Activated B cell treated with CpG ODN at 0.5 μM for 24 hours (primary cell): ENCODE measurements at regions of chr16 and their contacts with region 1.

Region 1: GRCh38 chr16:89490387-89491237 is at the start of gene ANKRD11:
- DNase-seq: peak; percentile 99
- ATAC-seq: peak; percentile 80
- H3K4me3 Mint-ChIP-seq: peak within 1 kb of the TSS; percentile 91
- H3K27ac Mint-ChIP-seq: peak within 1 kb of the TSS; percentile 97
- H3K4me1 Mint-ChIP-seq: peaks cover 58% of the 10 kb centered on the region
- H3K27me3 Mint-ChIP-seq: no peaks in the 10 kb centered on the region
- CTCF ChIP-seq: no peak
- total RNA-seq, gene ANKRD11: 216 and 243 TPM in 2 replicates

Region 2: GRCh38 chr16:89363621-89364393 is 126.8 kb before region 1 on chr16:
- CTCF ChIA-PET with region 1: no interaction called
- POLR2A ChIA-PET with region 1: interaction called, 8 read pairs
- intact Hi-C with region 1: loop called (anchors 1 kb)
- DNase-seq: no peak
- ATAC-seq: no peak
- H3K4me3 Mint-ChIP-seq: no peak overlapping the region
- H3K27ac Mint-ChIP-seq: peak overlapping the region; percentile 31
- H3K4me1 Mint-ChIP-seq: peaks cover 98% of the 10 kb centered on the region
- H3K27me3 Mint-ChIP-seq: no peaks in the 10 kb centered on the region
- CTCF ChIP-seq: no peak

Region 3: GRCh38 chr16:89436366-89436765 is 54.2 kb before region 1 on chr16:
- CTCF ChIA-PET with region 1: no interaction called
- POLR2A ChIA-PET with region 1: interaction called, 17 read pairs
- intact Hi-C with region 1: loop called (anchors 5 kb)
- DNase-seq: no peak
- ATAC-seq: no peak
- H3K4me3 Mint-ChIP-seq: no peak overlapping the region
- H3K27ac Mint-ChIP-seq: no peak overlapping the region
- H3K4me1 Mint-ChIP-seq: peaks cover 74% of the 10 kb centered on the region
- H3K27me3 Mint-ChIP-seq: no peaks in the 10 kb centered on the region
- CTCF ChIP-seq: no peak

Region 4: DNA sequence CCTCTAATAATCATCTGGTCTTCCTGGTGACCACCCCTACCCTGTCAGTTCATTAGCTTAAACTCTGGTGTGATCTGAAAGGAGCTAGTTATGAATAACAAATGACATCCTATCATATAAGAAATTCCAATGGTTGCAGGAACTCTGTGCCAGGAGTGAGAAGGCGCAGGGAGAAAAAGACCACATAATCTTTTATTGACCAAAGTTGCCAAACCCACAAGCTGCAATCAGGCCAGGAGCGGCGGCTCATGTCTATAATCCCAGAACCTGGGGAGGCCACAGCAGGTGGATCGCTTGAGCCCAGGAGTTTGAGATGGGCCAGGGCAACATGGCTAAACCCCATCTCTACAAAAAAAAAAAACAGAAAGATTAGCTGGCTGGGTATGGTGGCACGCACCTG is 23.7 kb before region 1 on chr16:
- CTCF ChIA-PET with region 1: no interaction called
- POLR2A ChIA-PET with region 1: interaction called, 13 read pairs
- intact Hi-C with region 1: no loop called
- DNase-seq: no peak
- ATAC-seq: no peak
- H3K4me3 Mint-ChIP-seq: no peak overlapping the region
- H3K27ac Mint-ChIP-seq: no peak overlapping the region
- H3K4me1 Mint-ChIP-seq: peaks cover 43% of the 10 kb centered on the region
- H3K27me3 Mint-ChIP-seq: no peaks in the 10 kb centered on the region
- CTCF ChIP-seq: no peak